ENCODE measurements at regions of chr12 and their contacts with region 1.

Region 1: DNA sequence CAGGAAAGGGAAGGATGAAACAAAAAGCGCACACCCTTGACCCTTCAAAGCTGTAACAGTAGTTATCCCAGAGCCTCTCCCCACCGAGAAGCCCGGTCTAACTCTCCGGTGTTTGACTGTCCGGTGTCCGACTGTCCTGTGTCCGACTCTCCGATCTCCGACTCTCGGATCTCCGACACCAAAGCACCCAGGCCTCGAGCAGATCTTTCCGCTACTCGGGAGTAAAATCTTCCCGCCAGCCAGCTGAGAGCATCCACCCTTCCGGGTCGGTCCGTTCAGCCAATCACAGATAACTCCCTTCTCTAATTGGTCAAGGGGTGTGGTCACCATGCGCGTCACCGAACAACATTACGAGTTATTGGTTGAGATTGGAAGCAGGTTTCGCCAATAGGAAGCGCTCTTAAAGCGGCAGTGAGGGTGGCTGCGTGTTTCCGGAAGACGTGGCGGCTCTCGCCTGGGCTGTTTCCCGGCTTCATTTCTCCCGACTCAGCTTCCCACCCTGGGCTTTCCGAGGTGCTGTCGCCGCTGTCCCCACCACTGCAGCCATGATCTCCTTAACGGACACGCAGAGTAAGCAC is at the starts of genes GOLT1B and RECQL:
- DNase-seq: peak; percentile 62 to 95 (median 92)
- ATAC-seq: peak; percentile 94 to 97
- H3K4me3 Mint-ChIP-seq: no peak within 1 kb of the TSS
- H3K27ac Mint-ChIP-seq: no peak within 1 kb of the TSS
- H3K4me1 Mint-ChIP-seq: peaks cover 21 to 58% (median 46%) of the 10 kb centered on the region in 4 donors
- H3K27me3 Mint-ChIP-seq: no peaks in the 10 kb centered on the region
- polyA plus RNA-seq, gene GOLT1B: 16.6 to 19.7 (median 19.2) TPM
- polyA plus RNA-seq, gene RECQL: 51.4 to 64.6 (median 52.9) TPM

Region 2: DNA sequence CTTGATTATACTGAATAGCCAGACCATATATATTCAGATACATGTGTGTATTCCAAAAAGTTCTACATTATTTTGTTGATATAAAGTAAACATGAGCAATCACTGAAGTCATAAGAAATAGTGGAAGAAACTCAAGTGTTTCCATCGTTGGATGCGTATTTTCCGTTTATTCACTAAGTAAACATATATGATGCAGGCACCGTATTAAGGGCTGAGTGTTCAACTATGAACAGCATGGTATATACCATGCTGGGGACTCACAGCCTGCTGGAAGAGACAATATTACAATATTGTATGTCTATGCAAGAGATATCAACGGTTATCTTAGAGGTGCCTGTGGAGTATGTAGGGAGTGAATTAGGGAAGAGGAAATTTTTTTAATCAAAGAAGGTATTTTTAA is 62.8 kb before region 1 on chr12:
- POLR2A ChIA-PET with region 1: interaction called, 23 read pairs
- DNase-seq: no peak
- ATAC-seq: no peak
- H3K4me3 Mint-ChIP-seq: peak overlapping the region; percentile 91 to 99 (median 98)
- H3K27ac Mint-ChIP-seq: peak overlapping the region; percentile 93 to 98 (median 98)
- H3K4me1 Mint-ChIP-seq: peaks cover 21 to 58% (median 42%) of the 10 kb centered on the region in 4 donors
- H3K27me3 Mint-ChIP-seq: peaks cover 0 to 1% (median 0%) of the 10 kb centered on the region in 5 donors

Measured in naive thymus-derived CD8-positive, alpha-beta T cell (primary cell).